ENCODE measurements at regions of chr15 and their contacts with region 1.

Region 1: GRCh38 chr15:60916679-60917460 is 312.2 kb downstream of the RORA start:
- DNase-seq: peak; percentile 83 to 89
- ATAC-seq: peak; percentile 85 to 92 (median 88)
- H3K4me3 ChIP-seq: peak overlapping the region in 4 of 10 donors; percentile 3 to 25 (median 16)
- H3K27ac ChIP-seq: peak overlapping the region; percentile 20 to 68 (median 50)
- H3K4me1 ChIP-seq: peaks cover 0 to 40% (median 26%) of the 10 kb centered on the region in 9 donors
- H3K27me3 ChIP-seq: no peaks in the 10 kb centered on the region
- CTCF ChIP-seq: peak; percentile 72 to 92 (median 86)

Region 2: GRCh38 chr15:60496853-60497252 is 420.0 kb before region 1 on chr15:
- intact Hi-C with region 1: no loop called
- DNase-seq: no peak
- ATAC-seq: no peak
- H3K4me3 ChIP-seq: no peak overlapping the region
- H3K27ac ChIP-seq: no peak overlapping the region
- H3K4me1 ChIP-seq: no peaks in the 10 kb centered on the region
- H3K27me3 ChIP-seq: no peaks in the 10 kb centered on the region
- CTCF ChIP-seq: no peak

Region 3: DNA sequence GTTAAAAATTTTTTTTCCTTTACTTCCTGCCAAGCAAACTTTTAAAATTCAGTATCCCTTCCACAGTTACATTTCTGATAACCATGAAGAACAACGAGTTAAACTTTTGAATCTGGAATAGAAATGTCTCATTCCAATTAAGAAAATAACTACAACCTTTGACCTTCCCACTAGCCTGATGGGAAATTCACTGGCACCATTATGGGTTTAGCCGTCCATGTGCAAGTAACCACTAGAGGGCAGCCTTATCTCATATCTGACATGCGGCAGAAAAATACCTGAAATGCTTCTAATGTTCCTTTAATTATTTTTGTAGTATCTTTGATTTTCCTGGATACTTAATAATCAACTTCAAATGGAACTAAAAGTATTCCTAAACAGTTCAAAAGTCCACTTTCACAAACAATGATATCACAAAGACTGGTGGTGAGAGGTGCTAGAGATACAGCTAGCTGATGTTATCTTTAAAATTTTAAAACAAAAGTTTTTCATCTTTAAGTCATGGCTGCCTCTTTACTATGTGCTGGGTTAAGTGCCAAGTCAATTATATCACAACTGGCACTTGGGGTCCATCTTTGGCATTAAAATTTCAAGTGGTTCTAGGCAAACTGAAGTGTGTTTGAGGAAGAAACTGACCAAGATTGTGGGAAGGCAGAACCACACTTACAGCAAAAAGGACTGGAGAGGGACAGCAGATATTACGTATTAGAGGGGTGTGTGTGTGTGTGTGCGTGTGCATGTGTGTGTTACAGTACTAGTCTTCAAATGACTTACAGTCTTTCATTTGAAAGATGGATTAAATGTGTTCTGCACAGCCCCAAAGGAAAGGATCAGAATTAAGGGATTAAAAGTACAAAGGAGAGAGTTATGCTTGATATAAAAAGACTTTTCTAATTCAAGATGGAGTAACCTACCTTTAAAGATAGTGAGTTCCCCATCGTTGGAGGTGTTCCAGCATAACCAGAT is 330.8 kb before region 1 on chr15:
- intact Hi-C with region 1: loop called (anchors 1 to 5 kb)
- DNase-seq: peak in 1 of 2 donors; percentile 71
- ATAC-seq: peak; percentile 61 to 87 (median 76)
- H3K4me3 ChIP-seq: no peak overlapping the region
- H3K27ac ChIP-seq: peak overlapping the region in 2 of 10 donors; percentile 28 to 52
- H3K4me1 ChIP-seq: peaks cover 2 to 72% (median 38%) of the 10 kb centered on the region in 9 donors
- H3K27me3 ChIP-seq: peaks cover 0 to 28% (median 0%) of the 10 kb centered on the region in 7 donors
- CTCF ChIP-seq: peak; percentile 74 to 97 (median 91)

Region 4: GRCh38 chr15:60751985-60752952 is 164.6 kb before region 1 on chr15:
- intact Hi-C with region 1: loop called in 2 of 10 experiments (anchors 5 to 10 kb)
- DNase-seq: peak; percentile 20 to 49
- ATAC-seq: peak; percentile 80 to 96 (median 93)
- H3K4me3 ChIP-seq: peak overlapping the region in 8 of 10 donors; percentile 16 to 37 (median 30)
- H3K27ac ChIP-seq: peak overlapping the region; percentile 7 to 82 (median 48)
- H3K4me1 ChIP-seq: peaks cover 0 to 23% (median 10%) of the 10 kb centered on the region in 9 donors
- H3K27me3 ChIP-seq: no peaks in the 10 kb centered on the region
- CTCF ChIP-seq: no peak

Region 5: GRCh38 chr15:60865507-60865906 is 51.4 kb before region 1 on chr15:
- intact Hi-C with region 1: no loop called
- DNase-seq: no peak
- ATAC-seq: peak in 1 of 8 donors; percentile 25
- H3K4me3 ChIP-seq: no peak overlapping the region
- H3K27ac ChIP-seq: no peak overlapping the region
- H3K4me1 ChIP-seq: peaks cover 0 to 6% (median 0%) of the 10 kb centered on the region in 9 donors
- H3K27me3 ChIP-seq: no peaks in the 10 kb centered on the region
- CTCF ChIP-seq: no peak

Region 6: DNA sequence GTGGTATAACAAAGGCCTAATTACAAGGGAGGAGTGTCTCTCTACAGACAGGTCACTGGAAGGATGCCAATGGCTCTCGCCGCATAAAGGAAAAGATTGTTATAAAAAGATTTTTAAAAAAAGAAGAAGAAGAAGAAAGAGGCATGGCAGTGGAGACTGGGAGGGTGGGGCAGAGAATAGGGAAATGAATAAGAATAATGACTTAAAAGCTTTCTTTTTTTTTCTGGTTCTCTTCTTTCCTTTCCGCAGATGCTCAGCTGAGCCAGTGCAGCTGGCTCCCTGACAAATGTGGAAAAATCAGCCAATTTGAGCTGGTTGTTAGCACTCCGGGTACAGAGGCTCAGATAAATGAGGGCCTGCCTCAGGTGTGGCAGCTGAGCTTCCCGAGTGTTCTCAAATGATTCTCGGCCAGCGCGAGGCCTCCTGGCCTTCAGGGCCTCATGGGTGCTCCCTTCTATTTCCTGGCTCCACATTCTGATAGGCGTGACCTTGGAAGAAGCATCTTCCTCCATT is 78.1 kb after region 1 on chr15:
- intact Hi-C with region 1: no loop called
- DNase-seq: peak; percentile 12 to 44
- ATAC-seq: peak in 6 of 8 donors; percentile 46 to 79 (median 60)
- H3K4me3 ChIP-seq: no peak overlapping the region
- H3K27ac ChIP-seq: peak overlapping the region in 6 of 10 donors; percentile 15 to 69 (median 32)
- H3K4me1 ChIP-seq: peaks cover 0 to 32% (median 10%) of the 10 kb centered on the region in 9 donors
- H3K27me3 ChIP-seq: no peaks in the 10 kb centered on the region
- CTCF ChIP-seq: no peak

Region 7: DNA sequence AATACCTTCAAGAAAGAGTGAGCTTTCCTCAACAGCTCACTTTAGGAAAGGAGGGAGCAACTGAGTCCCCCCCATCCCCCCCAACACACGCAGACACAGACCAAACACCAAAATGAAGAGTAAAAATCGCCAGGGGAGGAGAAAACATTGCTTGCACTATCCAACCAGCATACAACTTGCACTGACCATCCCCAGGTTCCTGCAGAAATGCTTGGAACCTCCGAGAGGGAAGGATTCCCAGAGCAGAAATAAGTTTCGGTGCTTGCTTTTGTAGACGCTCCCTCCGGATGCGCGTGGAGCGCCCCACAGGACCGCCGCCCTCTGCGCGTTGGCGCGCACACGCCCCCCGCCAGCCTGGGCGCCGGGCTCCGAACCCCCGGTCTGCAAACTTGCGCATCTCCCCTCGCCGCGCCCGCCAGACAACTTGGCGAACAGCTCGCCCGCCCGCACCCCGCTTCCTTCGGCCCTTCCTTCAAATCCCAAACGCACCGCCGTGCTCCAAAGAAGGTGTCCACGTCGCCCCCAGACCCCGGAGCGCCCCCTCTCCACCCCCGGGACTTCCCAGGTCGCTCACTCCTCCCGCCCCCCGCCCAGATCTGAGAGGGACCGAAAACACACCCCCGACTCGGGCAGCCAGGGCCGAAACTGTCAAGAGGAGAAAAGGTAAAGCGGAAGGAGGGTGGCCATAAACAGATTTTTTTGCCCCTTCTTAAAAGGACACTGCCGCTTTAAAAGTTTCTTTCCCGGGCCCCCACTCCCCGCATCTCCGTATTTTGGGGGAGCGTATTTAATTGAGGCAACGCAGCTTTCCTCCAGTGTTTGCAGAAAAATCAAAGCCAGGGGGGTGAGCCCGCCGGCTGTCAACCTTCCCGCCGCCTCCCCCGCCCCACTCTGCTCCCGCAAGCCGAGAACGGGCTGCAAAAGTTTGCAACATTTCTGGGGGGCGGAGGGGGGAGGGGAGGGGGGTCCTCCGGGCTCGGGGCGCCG is 311.4 kb after region 1 on chr15:
- intact Hi-C with region 1: loop called in 1 of 10 experiments (anchors 2 kb)
- DNase-seq: peak; percentile 6 to 26
- ATAC-seq: peak in 6 of 8 donors; percentile 5 to 22 (median 14)
- H3K4me3 ChIP-seq: peak overlapping the region; percentile 50 to 81 (median 67)
- H3K27ac ChIP-seq: peak overlapping the region in 6 of 10 donors; percentile 3 to 44 (median 40)
- H3K4me1 ChIP-seq: peaks cover 0 to 29% (median 16%) of the 10 kb centered on the region in 9 donors
- H3K27me3 ChIP-seq: peaks cover 0 to 69% (median 0%) of the 10 kb centered on the region in 7 donors
- CTCF ChIP-seq: no peak